ENCODE measurements at regions of chr20 and their contacts with region 1.

Region 1: DNA sequence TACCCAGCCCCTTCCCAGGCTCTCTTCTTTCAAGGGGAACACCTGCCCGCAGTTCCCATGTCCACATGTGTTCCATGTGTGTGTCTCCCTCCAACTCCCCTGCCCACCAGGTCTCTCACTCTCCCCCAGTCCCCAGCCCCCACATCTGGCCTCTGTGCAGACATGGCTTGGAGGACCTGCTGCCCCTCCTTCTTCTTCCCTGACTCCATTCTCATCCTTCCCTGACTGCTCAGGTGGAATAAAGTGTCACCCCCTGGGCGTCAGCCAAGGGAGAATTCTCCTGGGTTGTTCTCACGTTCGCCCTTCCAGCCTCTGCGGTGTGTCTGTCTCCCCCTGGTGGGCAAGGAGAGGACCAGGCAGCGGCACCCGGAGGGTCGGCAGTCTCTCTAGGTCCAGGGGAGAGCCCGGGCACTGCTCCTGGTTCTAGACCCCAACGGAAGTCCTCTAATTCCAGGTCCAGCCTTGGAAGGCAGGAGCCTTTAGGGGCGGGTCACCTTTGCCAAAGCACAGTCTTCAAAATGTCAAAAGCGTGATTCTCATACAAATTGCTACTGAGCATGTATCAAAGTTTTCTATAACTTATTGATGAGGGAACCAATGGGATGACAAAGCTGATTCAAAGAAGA is 50.5 kb downstream of the EBF4 start:
- DNase-seq: peak; percentile 83
- H3K4me3 Mint-ChIP-seq: peak overlapping the region; percentile 13
- H3K27ac Mint-ChIP-seq: peak overlapping the region; percentile 53
- H3K4me1 Mint-ChIP-seq: peaks cover 41% of the 10 kb centered on the region
- H3K27me3 Mint-ChIP-seq: no peaks in the 10 kb centered on the region

Region 2: DNA sequence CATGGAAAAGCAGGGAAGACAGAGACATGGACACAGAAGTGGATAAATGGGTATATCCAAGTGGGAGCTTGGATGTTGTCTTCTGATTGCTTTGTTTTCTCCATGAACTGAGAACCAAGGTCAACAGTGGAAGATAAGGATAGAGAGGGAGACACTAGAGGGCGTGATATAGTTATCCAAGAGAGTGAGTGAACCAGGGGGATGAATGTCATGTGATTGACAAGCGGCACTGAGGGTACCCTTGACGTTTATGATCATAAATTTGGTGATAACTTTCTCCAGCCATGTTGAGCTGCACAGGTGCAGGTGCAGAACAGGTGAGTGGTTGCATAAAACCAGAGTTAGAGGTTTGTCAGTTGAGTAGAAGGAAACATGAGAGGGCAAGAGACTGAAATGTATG is 29.8 kb before region 1 on chr20:
- CTCF ChIA-PET with region 1: interaction called, 39 read pairs
- POLR2A ChIA-PET with region 1: interaction called, 3 read pairs
- intact Hi-C with region 1: loop called (anchors 2 kb)
- DNase-seq: no peak
- H3K4me3 Mint-ChIP-seq: no peak overlapping the region
- H3K27ac Mint-ChIP-seq: no peak overlapping the region
- H3K4me1 Mint-ChIP-seq: no peaks in the 10 kb centered on the region
- H3K27me3 Mint-ChIP-seq: peaks cover 2% of the 10 kb centered on the region

Region 3: GRCh38 chr20:2729251-2729713 is 13.8 kb before region 1 on chr20:
- CTCF ChIA-PET with region 1: interaction called, 75 read pairs
- POLR2A ChIA-PET with region 1: interaction called, 3 read pairs
- intact Hi-C with region 1: no loop called
- DNase-seq: peak; percentile 52
- H3K4me3 Mint-ChIP-seq: peak overlapping the region; percentile 38
- H3K27ac Mint-ChIP-seq: peak overlapping the region; percentile 81
- H3K4me1 Mint-ChIP-seq: peaks cover 15% of the 10 kb centered on the region
- H3K27me3 Mint-ChIP-seq: no peaks in the 10 kb centered on the region

Region 4: DNA sequence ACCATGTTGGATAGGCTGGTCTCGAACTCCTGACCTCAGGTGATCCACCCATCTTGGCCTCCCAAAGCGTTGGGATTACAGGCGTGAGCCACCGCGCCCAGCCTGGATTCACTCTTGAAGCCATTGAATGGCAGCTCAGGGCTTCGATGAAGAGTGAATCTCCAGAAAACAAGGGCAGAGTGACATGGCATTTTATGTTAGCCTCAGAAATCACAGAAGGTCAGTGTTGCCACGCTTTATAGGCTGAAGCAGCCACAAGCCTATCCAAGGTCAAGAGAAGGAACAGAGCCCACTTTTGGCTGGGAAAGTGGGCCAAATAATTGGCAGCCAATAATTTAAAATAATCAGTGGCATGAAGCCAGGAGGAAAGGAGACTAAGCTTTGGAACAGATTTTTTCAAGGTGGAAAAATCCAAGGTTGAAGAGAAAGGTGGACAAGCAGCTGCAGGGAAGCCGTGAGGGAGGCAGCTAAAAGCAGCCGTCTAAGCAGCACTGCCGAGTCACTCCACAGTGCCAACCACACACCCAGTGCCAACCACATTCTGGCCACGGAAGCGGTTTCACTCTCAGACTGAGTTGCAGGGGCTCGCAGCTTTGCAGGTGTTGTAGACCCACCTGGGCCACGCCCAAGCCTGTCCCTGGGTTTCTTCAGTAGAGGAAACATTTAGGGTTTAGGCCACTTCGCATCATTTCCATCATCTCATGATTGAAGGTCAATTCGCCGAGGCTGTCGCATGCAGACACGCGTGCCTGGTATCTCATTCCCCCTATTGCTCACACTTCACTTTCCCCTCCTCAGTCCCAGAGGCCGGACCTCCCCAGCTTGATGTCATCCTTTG is 358.9 kb after region 1 on chr20:
- CTCF ChIA-PET with region 1: no interaction called
- POLR2A ChIA-PET with region 1: no interaction called
- intact Hi-C with region 1: no loop called
- DNase-seq: peak; percentile 88
- H3K4me3 Mint-ChIP-seq: no peak overlapping the region
- H3K27ac Mint-ChIP-seq: no peak overlapping the region
- H3K4me1 Mint-ChIP-seq: peaks cover 15% of the 10 kb centered on the region
- H3K27me3 Mint-ChIP-seq: no peaks in the 10 kb centered on the region

Measured in activated CD4-positive, alpha-beta memory T cell treated with anti-CD3 and anti-CD28 coated beads for 36 hours (primary cell).